Activated T-helper 1 cell treated with anti-CD3 and anti-CD28 coated beads, Interleukin-12 subunit alpha, Interleukin-12 subunit beta, Interleukin-2, Interleukin-4 antibody, amounts not matched to agents 30 ng/mL and 10 ng/mL and 1 ng/mL, durations not matched to agents 14 hours and 24 hours and 36 hours (primary cell): ENCODE measurements at regions of chr9 and their contacts with region 1.

Region 1: GRCh38 chr9:110152704-110153374 is 55.1 kb downstream of the C9orf152 start:
- DNase-seq: no peak
- H3K4me3 Mint-ChIP-seq: peak overlapping the region; percentile 55
- H3K27ac Mint-ChIP-seq: peak overlapping the region; percentile 79
- H3K4me1 Mint-ChIP-seq: peaks cover 100% of the 10 kb centered on the region
- H3K27me3 Mint-ChIP-seq: no peaks in the 10 kb centered on the region

Region 2: DNA sequence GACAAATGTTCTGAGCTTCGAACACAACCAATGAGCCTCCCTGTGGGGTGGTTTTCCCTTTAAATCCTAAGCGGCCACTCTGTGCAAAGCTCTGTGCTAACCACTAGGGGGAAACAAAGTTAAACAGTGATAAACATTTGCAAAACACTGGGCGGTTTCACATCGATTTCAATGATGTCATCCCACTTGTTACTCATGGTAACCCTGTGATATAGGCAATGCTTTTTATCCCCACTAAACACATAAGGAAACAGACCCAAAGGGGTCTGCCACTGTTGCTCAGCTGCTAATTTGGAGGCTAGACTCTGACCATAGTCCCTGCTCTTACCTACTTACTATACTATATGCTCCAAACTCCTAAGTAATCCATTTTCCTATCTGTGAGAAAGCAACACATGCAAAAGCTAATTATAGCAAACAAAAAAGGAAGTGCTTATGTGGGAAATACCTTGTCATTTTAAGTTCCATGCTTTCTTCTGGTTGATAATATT is 712.0 kb before region 1 on chr9:
- intact Hi-C with region 1: loop called (anchors 10 kb)
- DNase-seq: peak; percentile 71
- H3K4me3 Mint-ChIP-seq: no peak overlapping the region
- H3K27ac Mint-ChIP-seq: peak overlapping the region; percentile 85
- H3K4me1 Mint-ChIP-seq: peaks cover 34% of the 10 kb centered on the region
- H3K27me3 Mint-ChIP-seq: peaks cover 9% of the 10 kb centered on the region

Region 3: DNA sequence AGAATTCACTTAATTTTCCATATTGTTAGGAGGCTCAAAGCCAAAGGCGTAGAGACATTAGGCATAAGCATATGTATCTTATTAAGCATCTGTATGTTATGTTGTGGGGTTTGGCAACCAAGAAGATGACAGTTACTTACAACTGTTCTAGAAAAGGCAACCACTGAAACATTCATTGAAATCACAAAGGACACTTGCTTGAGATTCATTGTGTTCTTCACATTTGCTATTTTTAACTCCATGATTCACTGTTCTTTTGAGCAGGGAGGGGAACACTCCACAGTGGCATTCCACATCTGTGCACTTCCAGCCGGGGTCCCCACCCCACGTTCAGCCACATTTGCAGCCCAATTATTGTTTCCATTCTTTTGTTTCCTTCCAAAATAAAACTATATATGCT is 265.8 kb before region 1 on chr9:
- intact Hi-C with region 1: loop called (anchors 1 kb)
- DNase-seq: no peak
- H3K4me3 Mint-ChIP-seq: peak overlapping the region; percentile 64
- H3K27ac Mint-ChIP-seq: peak overlapping the region; percentile 92
- H3K4me1 Mint-ChIP-seq: peaks cover 94% of the 10 kb centered on the region
- H3K27me3 Mint-ChIP-seq: no peaks in the 10 kb centered on the region

Region 4: DNA sequence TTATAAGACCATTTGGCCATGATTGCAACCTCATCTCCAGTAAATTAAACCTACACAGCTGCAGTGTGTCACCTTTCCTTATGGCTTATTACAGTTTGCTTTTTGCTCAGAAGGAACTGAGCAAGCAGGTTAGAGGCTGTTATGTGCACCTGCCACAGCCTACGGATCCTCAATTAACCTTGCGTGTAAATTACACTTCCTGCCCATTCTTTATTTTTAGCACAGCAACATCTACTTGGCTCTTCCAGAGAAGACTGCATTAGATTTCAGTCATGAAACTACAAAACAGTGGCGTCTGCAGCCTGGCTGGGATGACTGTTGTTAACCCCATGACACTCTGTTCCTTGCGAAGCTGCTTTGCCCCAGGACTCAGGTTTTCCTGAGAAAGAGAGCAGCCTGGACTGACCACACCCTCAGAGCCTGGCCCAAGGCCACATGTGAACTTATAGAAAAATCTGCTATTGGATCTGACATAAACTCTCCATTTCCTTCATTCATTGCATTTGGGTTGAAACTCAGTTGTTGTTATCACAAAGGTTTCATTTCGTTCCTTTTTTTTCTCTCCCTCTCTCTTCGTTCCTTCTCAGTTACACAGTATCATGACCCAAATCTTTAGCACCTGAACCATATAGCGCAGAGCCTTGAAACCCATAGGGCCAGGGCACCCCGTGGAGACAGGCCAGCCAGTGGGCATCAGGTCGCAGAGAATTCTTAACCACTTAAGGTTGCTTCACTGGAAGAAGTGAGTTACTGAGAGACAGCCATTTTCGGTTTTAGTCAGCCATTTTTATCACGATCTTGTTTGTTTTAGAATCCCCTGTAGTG is 234.3 kb before region 1 on chr9:
- intact Hi-C with region 1: loop called (anchors 1 kb)
- DNase-seq: peak; percentile 44
- H3K4me3 Mint-ChIP-seq: peak overlapping the region; percentile 75
- H3K27ac Mint-ChIP-seq: peak overlapping the region; percentile 97
- H3K4me1 Mint-ChIP-seq: peaks cover 64% of the 10 kb centered on the region
- H3K27me3 Mint-ChIP-seq: no peaks in the 10 kb centered on the region

Region 5: GRCh38 chr9:109972026-109972882 is 180.6 kb before region 1 on chr9:
- intact Hi-C with region 1: loop called (anchors 1 kb)
- DNase-seq: no peak
- H3K4me3 Mint-ChIP-seq: peak overlapping the region; percentile 29
- H3K27ac Mint-ChIP-seq: peak overlapping the region; percentile 21
- H3K4me1 Mint-ChIP-seq: peaks cover 93% of the 10 kb centered on the region
- H3K27me3 Mint-ChIP-seq: no peaks in the 10 kb centered on the region

Region 6: GRCh38 chr9:110179734-110180133 is 26.9 kb after region 1 on chr9:
- intact Hi-C with region 1: no loop called
- DNase-seq: no peak
- H3K4me3 Mint-ChIP-seq: no peak overlapping the region
- H3K27ac Mint-ChIP-seq: no peak overlapping the region
- H3K4me1 Mint-ChIP-seq: peaks cover 15% of the 10 kb centered on the region
- H3K27me3 Mint-ChIP-seq: no peaks in the 10 kb centered on the region

Region 7: GRCh38 chr9:110256380-110257096 is 103.7 kb after region 1 on chr9 and contains the start of gene TXN:
- intact Hi-C with region 1: loop called (anchors 2 kb)
- DNase-seq: peak; percentile 85
- H3K4me3 Mint-ChIP-seq: peak within 1 kb of the TSS; percentile 98
- H3K27ac Mint-ChIP-seq: peak within 1 kb of the TSS; percentile 100
- H3K4me1 Mint-ChIP-seq: peaks cover 59% of the 10 kb centered on the region
- H3K27me3 Mint-ChIP-seq: peaks cover 10% of the 10 kb centered on the region
- total RNA-seq, gene TXN: 412 and 422 TPM in 2 replicates